AG04449 (cell line): ENCODE measurements at regions of chr1 and their contacts with region 1.

Region 1: GRCh38 chr1:209354111-209354839 is 229.2 kb upstream of the CAMK1G start:
- DNase-seq: peak; percentile 82
- H3K4me3 ChIP-seq: no peak overlapping the region
- CTCF ChIP-seq: peak; percentile 92

Region 2: DNA sequence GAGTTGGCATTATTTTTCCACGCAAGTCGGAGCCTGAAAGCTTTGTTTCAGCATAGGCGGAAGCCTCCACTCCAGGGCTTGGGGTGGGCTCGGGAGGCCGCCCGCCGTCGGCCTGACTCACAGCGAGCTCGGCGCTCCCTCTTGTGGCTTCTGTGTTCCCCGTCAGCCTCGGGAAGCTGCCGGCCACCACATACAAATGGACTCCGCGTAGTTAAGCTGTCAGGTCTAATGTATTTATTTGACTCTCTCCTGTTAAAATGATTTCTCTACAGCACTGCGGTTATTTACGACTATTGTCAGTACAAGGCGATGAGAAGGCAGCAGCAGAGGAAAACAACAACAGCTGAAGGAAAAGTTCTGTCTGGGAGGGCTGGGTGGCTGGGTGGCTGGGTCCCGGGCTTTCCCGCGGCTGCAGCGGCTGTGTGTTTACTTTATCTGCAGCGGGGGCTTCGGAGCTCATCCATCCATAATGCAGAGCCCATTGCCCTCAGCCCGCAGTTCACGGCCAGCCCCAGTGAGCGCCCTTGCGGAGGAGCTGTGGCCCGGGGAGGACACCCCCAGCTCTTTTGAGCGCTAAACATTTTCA is 146.5 kb before region 1 on chr1:
- CTCF ChIA-PET with region 1: interaction called, 81 read pairs
- POLR2A ChIA-PET with region 1: no interaction called
- DNase-seq: peak; percentile 4
- H3K4me3 ChIP-seq: peak overlapping the region; percentile 48
- CTCF ChIP-seq: peak; percentile 95

Region 3: DNA sequence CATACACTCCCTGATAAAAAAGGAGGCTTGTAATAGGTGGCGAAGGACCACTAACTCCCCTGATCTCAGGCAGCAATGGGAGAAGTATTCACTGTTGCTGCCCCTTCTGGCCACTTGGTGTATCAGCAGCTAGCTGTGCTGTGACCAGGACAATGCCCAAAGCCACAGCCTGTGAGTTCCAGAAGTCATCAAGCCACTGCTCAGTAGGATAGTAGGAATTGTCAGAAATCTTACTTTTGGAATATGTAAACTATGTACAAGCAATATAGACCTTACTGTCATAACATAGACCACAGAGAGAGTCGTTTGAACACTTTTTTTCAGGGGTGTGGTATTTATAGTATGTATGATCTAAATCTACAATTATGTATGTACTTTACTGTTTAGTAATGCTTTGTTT is 19.1 kb before region 1 on chr1:
- CTCF ChIA-PET with region 1: interaction called, 82 read pairs
- POLR2A ChIA-PET with region 1: no interaction called
- DNase-seq: peak; percentile 16
- H3K4me3 ChIP-seq: no peak overlapping the region
- CTCF ChIP-seq: peak; percentile 85

Region 4: GRCh38 chr1:209368864-209369598 is 14.8 kb after region 1 on chr1:
- CTCF ChIA-PET with region 1: interaction called, 162 read pairs
- POLR2A ChIA-PET with region 1: interaction called, 3 read pairs
- DNase-seq: peak; percentile 90
- H3K4me3 ChIP-seq: no peak overlapping the region
- CTCF ChIP-seq: no peak

Region 5: GRCh38 chr1:209435654-209436566 is 81.6 kb after region 1 on chr1:
- CTCF ChIA-PET with region 1: interaction called, 62 read pairs
- POLR2A ChIA-PET with region 1: no interaction called
- DNase-seq: no peak
- H3K4me3 ChIP-seq: no peak overlapping the region
- CTCF ChIP-seq: peak; percentile 95